ENCODE measurements at regions of chr20 and their contacts with region 1.

Region 1: DNA sequence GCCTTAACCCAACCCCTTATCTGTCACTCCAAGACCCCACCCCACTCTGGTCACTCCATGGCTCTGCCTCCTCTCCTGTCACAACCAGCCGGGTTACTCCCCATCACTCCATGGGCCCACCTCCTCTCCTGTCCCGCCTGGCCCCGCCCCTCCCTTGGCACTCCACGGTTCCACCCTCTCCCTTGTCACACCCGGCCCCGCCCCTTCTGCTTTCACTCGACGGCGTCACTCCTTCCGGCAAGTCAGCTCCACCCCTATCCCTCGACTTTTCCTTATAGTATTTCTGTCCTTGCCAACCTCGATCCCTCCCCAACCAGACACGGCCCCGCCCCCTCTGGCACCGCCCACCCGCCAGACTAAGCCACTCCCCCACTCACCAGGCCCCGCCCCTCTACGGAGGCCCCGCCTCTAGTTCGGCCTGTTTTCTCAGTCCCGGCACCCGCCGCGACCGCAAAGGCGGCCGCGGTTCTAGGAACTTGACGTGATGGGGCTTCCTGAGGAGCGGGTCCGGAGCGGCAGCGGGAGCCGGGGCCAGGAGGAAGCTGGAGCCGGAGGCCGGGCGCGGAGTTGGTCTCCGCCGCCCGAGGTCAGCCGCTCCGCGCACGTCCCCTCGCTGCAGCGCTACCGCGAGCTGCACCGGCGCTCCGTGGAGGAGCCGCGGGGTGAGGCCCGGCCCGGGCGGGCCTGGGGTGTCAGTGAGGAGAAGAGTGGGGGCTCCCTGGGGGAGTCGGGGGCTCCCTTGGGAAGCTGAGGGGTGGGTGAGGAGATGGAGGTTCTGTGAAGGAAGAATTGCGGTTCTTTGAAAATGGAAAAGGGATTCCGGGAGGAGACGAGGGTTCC is at the start of gene ACSS2:
- DNase-seq: peak; percentile 99
- ATAC-seq: peak; percentile 85
- total RNA-seq, gene ACSS2: 137 TPM

Region 2: DNA sequence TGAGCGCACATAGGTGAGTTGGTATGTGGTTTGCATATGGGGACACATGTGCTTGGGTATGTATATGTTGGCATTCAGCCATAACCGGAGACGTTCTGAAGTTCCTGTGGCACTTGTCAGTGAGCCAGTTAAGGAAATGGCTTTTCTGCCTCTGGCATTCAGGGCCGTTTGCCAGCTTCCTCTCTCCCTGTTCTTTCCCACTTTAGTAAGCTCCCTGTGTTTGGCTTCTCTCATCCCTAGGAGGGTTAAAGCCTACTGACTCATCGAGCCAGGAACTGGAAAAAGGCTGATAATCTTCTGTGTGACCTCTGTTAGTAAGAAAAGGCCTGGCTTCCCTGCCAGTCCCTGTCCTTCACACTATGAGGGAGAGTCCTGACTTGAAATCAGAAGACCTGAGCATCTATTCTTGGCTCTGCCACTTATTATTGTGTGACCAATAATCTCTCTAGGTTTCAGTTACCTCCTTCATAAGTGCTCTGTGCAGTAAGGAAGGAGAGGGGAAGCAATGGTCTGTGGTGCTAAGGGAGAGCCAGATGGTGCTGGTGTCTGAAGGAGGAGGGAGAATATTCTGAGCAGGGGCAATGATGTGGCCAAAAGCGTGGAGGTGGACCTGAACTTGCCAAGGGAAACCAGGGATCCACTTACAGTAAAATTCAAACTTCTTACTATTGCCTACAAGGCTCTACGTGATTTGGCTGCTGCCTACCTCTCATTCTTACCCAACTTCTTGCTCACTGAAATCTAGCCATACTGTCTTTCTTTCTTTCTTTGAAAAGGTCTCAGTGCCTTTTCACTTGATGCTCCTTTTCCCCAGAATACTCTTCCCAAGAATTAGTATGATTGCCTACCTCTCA is 31.5 kb after region 1 on chr20:
- intact Hi-C with region 1: loop called (anchors 2 kb)
- DNase-seq: peak; percentile 71
- ATAC-seq: peak; percentile 92

Region 3: GRCh38 chr20:34955232-34956040 is 79.1 kb after region 1 on chr20 and contains the starts of genes GSS and MYH7B:
- intact Hi-C with region 1: loop called (anchors 2 kb)
- DNase-seq: peak; percentile 100
- ATAC-seq: peak; percentile 96
- total RNA-seq, gene GSS: 15.7 TPM
- total RNA-seq, gene MYH7B: 222 TPM

Region 4: DNA sequence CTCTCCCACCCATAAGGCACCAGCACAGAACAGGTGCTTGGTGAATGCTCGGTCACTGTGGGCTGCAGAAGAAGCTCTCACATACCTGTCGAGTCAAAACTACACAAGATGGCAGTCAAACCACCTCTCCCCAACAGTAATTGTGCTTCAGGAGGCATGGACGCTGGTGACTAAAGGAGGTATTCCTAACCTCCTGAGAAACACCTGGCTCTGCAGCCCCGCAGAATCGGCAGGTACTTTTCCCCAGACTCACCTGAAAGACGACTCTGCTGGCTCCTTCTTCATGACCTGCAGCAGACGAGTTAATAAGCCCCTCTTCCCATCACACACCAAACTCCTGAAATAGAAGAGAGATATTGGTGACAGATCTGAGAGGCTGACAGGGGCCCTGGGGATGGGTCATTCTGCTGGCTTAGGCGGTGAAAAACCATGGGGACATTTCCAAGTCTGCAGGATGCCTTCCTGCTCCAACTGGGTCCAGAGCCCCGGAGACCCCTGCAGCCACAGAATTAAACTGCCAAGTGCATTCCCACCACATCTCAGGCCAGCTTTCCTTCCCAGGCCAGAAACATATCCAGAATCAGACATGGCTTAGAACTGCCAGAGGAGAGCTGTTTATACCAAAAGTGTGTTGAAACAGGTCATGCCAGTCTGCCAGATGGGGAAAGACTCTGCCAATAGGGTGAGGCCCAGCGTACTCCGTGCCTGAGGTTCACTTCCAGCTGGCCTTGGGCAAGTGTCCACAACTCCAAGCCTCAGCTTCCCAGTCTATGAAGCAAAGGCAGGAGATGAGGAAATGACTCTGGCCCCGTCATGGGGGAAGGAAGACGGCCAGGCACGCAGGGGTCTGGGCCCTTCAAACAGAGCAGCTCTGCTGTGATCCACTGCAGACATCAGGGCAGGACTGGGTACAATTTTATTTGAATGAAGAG is 132.3 kb after region 1 on chr20:
- intact Hi-C with region 1: loop called (anchors 5 kb)
- DNase-seq: peak; percentile 74
- ATAC-seq: peak; percentile 45

Region 5: DNA sequence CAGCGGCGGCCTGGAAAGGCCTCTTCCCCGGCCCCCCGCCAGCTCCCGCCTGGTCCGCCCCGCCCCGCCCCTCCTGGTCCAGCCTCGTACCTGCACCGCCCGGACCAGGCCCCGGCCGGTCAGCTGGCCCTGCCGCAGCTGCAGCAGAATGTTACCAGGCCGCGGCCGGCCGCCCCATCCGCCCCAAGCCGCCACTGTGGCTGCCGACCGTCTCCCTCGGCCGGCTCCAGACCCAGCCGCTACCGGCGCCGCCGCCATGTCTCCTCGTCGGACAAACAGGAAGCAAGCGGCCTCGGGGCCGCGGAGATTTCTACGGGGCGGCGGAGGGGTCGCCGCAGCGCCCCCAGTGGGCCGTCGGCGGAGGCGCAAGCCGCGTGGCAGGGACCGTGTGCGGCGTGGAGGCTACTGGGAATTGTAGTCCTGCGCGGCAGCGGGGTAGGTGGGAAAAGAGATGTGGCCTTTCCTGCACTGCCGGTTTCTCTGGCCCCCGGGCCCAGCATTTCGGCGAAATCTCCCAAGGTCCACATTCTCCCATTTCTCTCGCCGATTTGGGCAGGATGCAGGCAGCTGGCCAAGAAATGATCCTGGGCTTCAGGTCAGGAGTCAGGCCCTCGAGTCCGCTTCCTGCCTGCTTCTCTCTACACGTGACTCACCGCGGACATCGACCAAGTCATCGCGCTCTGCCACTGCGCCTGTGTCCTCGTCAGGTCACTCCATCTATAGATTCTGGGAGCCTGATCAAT is 216.3 kb after region 1 on chr20 and contains the start of gene TRPC4AP:
- intact Hi-C with region 1: no loop called
- DNase-seq: peak; percentile 95
- ATAC-seq: peak; percentile 97
- total RNA-seq, gene TRPC4AP: 33.8 TPM

Measured in Right ventricle myocardium superior (tissue), 1 donor.